Heart right ventricle (tissue), 16 donors: ENCODE measurements at regions of chr1 and their contacts with region 1.

Region 1: DNA sequence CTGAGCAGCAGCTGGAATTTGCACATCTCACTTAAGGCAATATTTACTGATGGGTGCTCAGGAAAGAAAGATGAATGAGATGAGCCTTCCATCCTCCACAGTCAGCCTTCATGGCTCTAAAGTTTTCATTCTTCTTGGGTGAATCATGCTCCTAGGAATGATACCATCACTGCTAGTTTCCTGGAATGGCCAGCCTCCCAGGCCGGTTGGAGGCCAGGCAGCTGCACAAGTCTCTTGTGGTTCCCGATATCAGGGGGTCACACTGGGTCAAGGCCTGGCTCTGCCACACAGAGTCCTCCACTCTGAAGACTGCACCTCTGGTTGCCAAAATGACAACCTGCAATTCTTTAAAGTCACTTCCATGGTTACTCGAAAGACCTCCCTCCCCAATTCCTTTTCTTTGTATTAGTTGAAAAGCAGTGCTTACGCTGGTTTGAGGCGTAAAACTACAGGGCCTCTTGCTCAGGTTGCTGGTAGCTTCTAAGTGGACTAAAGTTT is 46.2 kb upstream of the PALMD start:
- DNase-seq: peak; percentile 12 to 48
- ATAC-seq: peak in 7 of 8 donors; percentile 41 to 87 (median 53)
- H3K4me3 ChIP-seq: no peak overlapping the region
- H3K27ac ChIP-seq: peak overlapping the region in 9 of 10 donors; percentile 11 to 72 (median 58)
- H3K4me1 ChIP-seq: peaks cover 2 to 63% (median 30%) of the 10 kb centered on the region in 9 donors
- H3K27me3 ChIP-seq: no peaks in the 10 kb centered on the region
- CTCF ChIP-seq: no peak

Region 2: GRCh38 chr1:99634971-99635624 is 35.4 kb after region 1 on chr1:
- intact Hi-C with region 1: loop called in 3 of 10 experiments (anchors 5 to 10 kb)
- DNase-seq: no peak
- ATAC-seq: no peak
- H3K4me3 ChIP-seq: no peak overlapping the region
- H3K27ac ChIP-seq: peak overlapping the region in 5 of 10 donors; percentile 3 to 68 (median 14)
- H3K4me1 ChIP-seq: peaks cover 0 to 54% (median 14%) of the 10 kb centered on the region in 9 donors
- H3K27me3 ChIP-seq: no peaks in the 10 kb centered on the region
- CTCF ChIP-seq: no peak

Region 3: GRCh38 chr1:99685516-99686180 is 85.9 kb after region 1 on chr1:
- intact Hi-C with region 1: loop called in 3 of 10 experiments (anchors 10 kb)
- DNase-seq: peak; percentile 68 to 88
- ATAC-seq: peak; percentile 91 to 95 (median 93)
- H3K4me3 ChIP-seq: no peak overlapping the region
- H3K27ac ChIP-seq: peak overlapping the region; percentile 1 to 83 (median 62)
- H3K4me1 ChIP-seq: peaks cover 7 to 72% (median 43%) of the 10 kb centered on the region in 9 donors
- H3K27me3 ChIP-seq: no peaks in the 10 kb centered on the region
- CTCF ChIP-seq: peak; percentile 49 to 76 (median 69)